Endothelial cell of umbilical vein (primary cell): ENCODE measurements at regions of chr19 and their contacts with region 1.

Region 1: DNA sequence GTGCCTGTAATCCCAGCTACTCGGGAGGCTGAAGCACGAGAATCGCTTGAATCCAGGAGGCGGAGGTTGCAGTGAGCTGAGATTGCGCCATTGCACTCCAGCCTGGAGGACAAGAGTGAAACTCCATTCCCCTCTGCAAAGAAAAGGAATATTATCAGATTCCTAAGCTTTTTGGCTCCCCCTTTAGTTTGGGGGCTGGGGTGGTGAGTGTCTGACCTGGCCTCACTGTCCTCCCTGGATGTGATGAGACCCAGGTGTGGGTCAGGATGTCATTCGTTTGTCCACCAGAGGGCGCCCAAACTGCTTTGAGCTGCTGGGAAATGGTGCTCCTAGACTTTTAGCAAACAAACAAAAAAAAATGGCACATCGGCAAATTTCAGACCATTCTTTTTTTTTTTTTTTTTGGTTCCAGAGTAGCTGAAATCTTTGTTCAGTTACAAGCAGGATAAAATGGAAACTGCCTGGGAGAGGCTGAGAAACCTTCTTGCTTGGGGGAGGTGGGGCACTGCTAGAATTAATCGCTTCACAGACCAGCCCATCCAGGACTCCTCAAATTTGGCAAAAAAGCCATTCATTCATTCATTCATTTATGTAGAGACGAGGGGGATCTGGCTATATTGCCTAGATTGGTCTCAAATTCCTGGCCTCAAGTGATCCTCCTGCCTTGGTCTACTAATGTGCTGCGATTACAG is 29.4 kb downstream of the SPC24 start:
- DNase-seq: peak; percentile 68
- H3K4me3 ChIP-seq: no peak overlapping the region
- H3K27ac ChIP-seq: no peak overlapping the region
- H3K4me1 ChIP-seq: peaks cover 4% of the 10 kb centered on the region
- H3K27me3 ChIP-seq: no peaks in the 10 kb centered on the region
- CTCF ChIP-seq: peak; percentile 61 to 72
- POLR2A ChIP-seq: no peak

Region 2: DNA sequence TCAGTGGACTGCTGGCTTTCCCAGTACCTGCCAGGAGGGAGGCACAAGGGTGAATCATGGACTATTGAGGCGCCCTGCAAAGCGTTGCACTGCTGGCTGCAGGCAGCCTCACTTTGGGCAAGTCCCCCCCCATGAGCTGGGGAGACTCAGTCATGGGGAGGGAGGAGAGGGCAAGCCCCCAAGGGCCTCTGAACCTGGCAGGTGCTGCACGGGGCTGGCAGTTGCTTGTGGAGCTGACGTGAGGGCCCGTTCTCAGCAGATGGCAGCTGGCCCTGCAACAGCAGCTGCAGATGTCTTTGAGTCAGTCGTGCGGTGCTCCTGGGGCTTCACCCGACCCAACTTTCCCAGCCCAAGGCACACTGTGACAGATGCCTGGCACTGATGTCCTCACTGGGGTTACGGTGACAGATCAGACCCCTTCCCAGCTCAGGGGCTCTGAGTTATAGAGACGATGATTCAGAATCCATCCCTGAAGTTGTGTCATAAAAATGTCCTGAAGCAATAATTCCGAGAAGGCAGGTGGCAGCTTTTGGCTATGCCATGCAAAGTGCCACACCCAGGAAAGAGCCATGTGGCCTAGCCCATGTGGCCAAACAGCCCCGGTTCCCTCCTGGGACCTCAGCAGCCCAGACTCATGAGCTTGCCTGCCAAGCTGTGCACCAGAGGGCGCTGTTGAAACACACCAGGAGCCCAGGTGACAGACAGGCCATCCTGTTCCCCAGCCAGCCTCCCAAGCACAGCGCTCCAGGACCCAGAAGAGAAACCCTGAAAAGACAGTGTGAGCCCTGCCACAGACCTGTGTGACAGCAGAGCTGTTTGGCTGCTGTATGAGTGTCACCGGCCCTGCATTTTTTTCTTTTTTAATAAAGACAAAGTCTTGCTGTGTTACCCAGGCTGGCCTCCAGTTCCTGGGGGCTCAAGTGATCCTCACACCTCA is 90.4 kb before region 1 on chr19:
- CTCF ChIA-PET with region 1: interaction called, 30 read pairs
- POLR2A ChIA-PET with region 1: no interaction called
- dilution Hi-C with region 1: no loop called
- intact Hi-C with region 1: loop called (anchors 2 kb)
- DNase-seq: peak; percentile 69
- H3K4me3 ChIP-seq: no peak overlapping the region
- H3K27ac ChIP-seq: no peak overlapping the region
- H3K4me1 ChIP-seq: no peaks in the 10 kb centered on the region
- H3K27me3 ChIP-seq: no peaks in the 10 kb centered on the region
- CTCF ChIP-seq: peak; percentile 86 to 94
- POLR2A ChIP-seq: no peak

Region 3: GRCh38 chr19:11115895-11116446 is 10.2 kb before region 1 on chr19:
- CTCF ChIA-PET with region 1: interaction called, 12 read pairs
- POLR2A ChIA-PET with region 1: no interaction called
- dilution Hi-C with region 1: no loop called
- intact Hi-C with region 1: no loop called
- DNase-seq: no peak
- H3K4me3 ChIP-seq: no peak overlapping the region
- H3K27ac ChIP-seq: no peak overlapping the region
- H3K4me1 ChIP-seq: no peaks in the 10 kb centered on the region
- H3K27me3 ChIP-seq: no peaks in the 10 kb centered on the region
- CTCF ChIP-seq: no peak
- POLR2A ChIP-seq: no peak

Region 4: GRCh38 chr19:11164879-11165406 is 38.8 kb after region 1 on chr19:
- CTCF ChIA-PET with region 1: interaction called, 29 read pairs
- POLR2A ChIA-PET with region 1: no interaction called
- dilution Hi-C with region 1: no loop called
- intact Hi-C with region 1: loop called (anchors 1 kb)
- DNase-seq: peak; percentile 51
- H3K4me3 ChIP-seq: no peak overlapping the region
- H3K27ac ChIP-seq: peak overlapping the region; percentile 35
- H3K4me1 ChIP-seq: peaks cover 31% of the 10 kb centered on the region
- H3K27me3 ChIP-seq: no peaks in the 10 kb centered on the region
- CTCF ChIP-seq: no peak
- POLR2A ChIP-seq: no peak

Region 5: DNA sequence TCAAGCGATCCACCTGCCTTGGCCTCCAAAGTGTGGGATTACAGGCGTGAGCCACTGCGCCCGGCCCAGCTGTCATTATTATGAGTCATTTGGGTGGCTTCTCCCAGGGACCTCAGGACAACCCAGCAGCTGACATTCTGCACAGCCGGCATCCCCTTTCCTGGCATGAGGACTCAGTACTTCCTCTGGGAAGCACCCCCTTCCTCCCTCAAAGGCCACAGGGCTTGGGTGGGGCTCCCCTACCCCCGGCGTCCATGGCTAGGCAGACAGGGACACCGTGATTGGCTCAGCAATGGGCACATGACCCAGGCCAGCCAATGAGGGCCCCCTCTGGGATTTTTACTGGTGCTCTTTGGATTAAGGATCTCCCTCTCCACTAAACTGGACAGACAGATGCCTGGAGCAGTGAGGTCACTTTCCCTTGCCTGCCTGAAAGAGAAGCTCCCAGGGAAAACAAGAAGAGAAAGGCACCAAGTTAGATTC is 65.2 kb after region 1 on chr19:
- CTCF ChIA-PET with region 1: interaction called, 25 read pairs
- POLR2A ChIA-PET with region 1: no interaction called
- dilution Hi-C with region 1: no loop called
- intact Hi-C with region 1: no loop called
- DNase-seq: peak; percentile 40
- H3K4me3 ChIP-seq: no peak overlapping the region
- H3K27ac ChIP-seq: peak overlapping the region; percentile 12
- H3K4me1 ChIP-seq: peaks cover 16% of the 10 kb centered on the region
- H3K27me3 ChIP-seq: no peaks in the 10 kb centered on the region
- CTCF ChIP-seq: no peak
- POLR2A ChIP-seq: no peak

Region 6: GRCh38 chr19:11203194-11204075 is 77.3 kb after region 1 on chr19:
- CTCF ChIA-PET with region 1: interaction called, 116 read pairs
- POLR2A ChIA-PET with region 1: interaction called, 3 read pairs
- dilution Hi-C with region 1: no loop called
- intact Hi-C with region 1: loop called (anchors 1 kb)
- DNase-seq: peak; percentile 54
- H3K4me3 ChIP-seq: no peak overlapping the region
- H3K27ac ChIP-seq: peak overlapping the region; percentile 49
- H3K4me1 ChIP-seq: peaks cover 5% of the 10 kb centered on the region
- H3K27me3 ChIP-seq: no peaks in the 10 kb centered on the region
- CTCF ChIP-seq: peak; percentile 80 to 93
- POLR2A ChIP-seq: no peak